Gastrocnemius medialis (tissue), 4 donors: ENCODE measurements at regions of chr9 and their contacts with region 1.

Region 1: DNA sequence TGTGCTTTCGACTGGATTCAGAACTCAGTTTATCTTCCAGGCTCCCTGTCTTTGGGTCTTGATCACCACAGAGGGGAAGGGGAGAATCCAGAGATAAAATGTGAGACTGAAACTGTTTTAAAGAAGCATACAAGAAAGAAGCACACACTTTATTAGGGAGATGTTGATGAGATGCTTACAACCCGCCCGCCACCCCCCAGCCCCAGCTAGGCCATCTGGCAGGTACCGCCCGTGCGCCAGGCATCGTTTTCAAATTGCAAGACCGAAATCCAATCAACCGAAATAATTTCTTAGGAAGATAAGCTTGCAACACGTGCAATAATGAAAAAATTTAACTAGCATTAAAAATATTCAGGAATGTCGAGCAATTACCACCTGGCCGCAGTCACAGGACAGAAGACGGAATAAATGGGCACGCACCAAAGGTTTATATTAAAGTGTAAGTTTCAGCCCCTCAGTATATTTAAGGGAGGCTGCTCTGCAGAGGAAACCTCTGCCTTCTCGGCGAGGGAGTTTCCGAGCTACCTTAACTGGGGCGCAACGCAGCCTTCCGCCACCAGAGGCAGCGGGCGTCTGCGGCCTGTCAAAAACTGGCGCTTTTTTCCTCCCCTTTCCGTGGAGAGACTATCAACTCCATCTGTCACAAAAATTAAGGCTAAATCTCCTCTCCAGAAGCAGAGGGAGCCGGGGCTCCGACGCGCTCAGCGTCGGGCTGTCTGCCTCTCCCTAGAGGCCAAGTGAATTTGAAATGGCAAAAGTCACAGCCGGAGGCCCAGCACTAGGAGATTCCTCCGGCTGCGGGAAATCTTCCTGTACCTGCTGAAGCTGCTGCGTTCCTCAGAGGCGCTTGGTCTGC is 996 bp upstream of the GAS1 start:
- DNase-seq: peak; percentile 56 to 64
- ATAC-seq: peak; percentile 58 to 63
- H3K4me3 ChIP-seq: peak overlapping the region; percentile 77 to 96 (median 80)
- H3K27ac ChIP-seq: peak overlapping the region; percentile 80 to 92 (median 84)
- H3K4me1 ChIP-seq: peaks cover 16 to 18% of the 10 kb centered on the region in 2 donors
- H3K27me3 ChIP-seq: peaks cover 5 to 11% (median 7%) of the 10 kb centered on the region in 3 donors
- CTCF ChIP-seq: peak; percentile 74 to 93 (median 82)
- POLR2A ChIP-seq: no peak

Region 2: DNA sequence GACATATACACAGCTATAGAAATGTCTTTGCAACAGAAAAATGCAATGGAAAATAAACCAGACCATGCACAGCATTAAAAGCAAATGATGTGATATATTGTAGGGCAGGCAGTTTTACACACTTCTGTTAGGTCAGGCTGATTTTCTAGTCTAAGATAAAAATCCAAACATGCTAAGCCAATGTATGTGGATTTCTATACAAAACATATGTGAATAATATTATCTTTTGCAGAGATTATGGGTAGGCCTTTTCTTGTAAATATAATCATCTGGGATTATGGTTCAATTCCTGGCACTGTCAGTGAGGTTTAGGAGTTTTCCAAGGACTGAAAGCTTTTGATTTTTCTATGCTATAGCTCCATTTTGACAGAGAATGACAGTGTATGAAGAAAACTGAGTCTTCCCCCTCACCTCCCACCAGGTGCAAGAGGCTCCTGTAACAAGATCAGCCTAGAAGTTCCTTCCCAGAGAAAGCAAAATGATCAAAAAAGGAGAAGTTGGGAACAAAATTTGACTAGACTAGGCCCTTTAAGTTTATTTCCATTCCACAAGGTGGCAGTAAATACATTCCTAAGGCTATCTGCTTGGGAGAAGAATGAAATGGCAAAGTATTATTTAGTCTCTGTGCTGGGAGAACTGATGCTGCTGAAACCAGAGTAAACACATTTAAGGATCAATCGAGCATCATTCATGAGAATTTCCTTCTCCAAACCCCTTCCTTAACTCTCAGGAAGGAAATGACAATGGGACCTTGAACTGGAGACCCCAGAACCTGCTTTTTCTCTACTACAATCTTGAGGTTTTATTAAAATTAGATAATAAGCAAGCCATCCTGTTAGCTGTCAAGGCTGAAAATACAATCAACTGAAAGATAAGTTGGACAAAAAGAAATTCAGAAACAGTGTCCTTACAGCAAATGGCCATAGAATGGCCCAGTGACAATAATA is 461.1 kb before region 1 on chr9:
- in situ Hi-C with region 1: loop called in 1 of 4 experiments (anchors 25 kb)
- intact Hi-C with region 1: no loop called
- DNase-seq: no peak
- ATAC-seq: peak; percentile 70 to 84
- H3K4me3 ChIP-seq: no peak overlapping the region
- H3K27ac ChIP-seq: no peak overlapping the region
- H3K4me1 ChIP-seq: no peaks in the 10 kb centered on the region
- H3K27me3 ChIP-seq: no peaks in the 10 kb centered on the region
- CTCF ChIP-seq: peak; percentile 52 to 67 (median 59)
- POLR2A ChIP-seq: no peak

Region 3: DNA sequence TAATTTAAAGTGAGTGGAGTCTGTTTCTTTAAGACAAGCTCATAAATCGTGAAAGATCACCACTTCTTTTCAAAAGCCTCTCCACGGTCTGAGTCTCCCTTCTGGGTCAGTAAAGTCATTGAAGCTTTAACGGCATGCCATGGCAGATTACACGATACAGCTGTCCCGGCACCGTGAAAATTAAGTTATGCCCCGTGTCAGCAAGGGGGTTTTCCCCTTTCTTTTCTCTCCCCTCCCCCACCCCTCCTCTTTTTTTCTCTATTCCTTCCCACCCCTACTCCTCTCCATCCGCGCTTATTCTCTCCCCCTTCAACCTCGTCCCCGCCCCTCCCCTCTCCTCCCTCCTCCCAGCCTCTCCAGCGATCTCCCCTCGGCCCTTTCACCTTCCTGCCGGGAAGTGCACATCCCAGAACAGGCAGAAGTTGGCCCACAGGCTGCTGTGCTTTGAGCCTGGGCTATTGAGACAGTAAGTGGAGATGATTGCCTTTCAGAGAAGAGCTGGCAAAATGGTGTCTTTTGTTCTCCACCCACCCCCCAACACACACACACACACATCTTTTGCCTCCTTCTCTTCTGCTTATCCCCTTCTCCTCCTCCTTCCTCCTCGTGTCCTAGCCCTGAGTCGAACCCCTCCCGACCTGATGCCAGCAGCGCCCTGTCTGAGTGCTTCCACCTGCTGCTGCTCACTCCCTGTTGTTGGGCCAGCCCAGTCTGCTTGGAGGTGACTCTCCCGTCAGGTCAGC is 45.1 kb before region 1 on chr9:
- in situ Hi-C with region 1: no loop called
- intact Hi-C with region 1: no loop called
- DNase-seq: no peak
- ATAC-seq: no peak
- H3K4me3 ChIP-seq: peak overlapping the region in 2 of 4 donors; percentile 0 to 10
- H3K27ac ChIP-seq: no peak overlapping the region
- H3K4me1 ChIP-seq: no peaks in the 10 kb centered on the region
- H3K27me3 ChIP-seq: peaks cover 12 to 19% (median 16%) of the 10 kb centered on the region in 3 donors
- CTCF ChIP-seq: no peak
- POLR2A ChIP-seq: no peak

Region 4: GRCh38 chr9:86983260-86984255 is 35.3 kb after region 1 on chr9:
- in situ Hi-C with region 1: no loop called
- intact Hi-C with region 1: loop called (anchors 2 kb)
- DNase-seq: peak; percentile 13 to 32
- ATAC-seq: peak; percentile 72 to 80
- H3K4me3 ChIP-seq: no peak overlapping the region
- H3K27ac ChIP-seq: peak overlapping the region in 3 of 4 donors; percentile 43 to 77 (median 47)
- H3K4me1 ChIP-seq: peaks cover 12 to 15% of the 10 kb centered on the region in 2 donors
- H3K27me3 ChIP-seq: no peaks in the 10 kb centered on the region
- CTCF ChIP-seq: no peak
- POLR2A ChIP-seq: no peak

Region 5: GRCh38 chr9:86997158-86997557 is 48.9 kb after region 1 on chr9:
- in situ Hi-C with region 1: no loop called
- intact Hi-C with region 1: loop called (anchors 2 kb)
- DNase-seq: no peak
- ATAC-seq: no peak
- H3K4me3 ChIP-seq: no peak overlapping the region
- H3K27ac ChIP-seq: no peak overlapping the region
- H3K4me1 ChIP-seq: no peaks in the 10 kb centered on the region
- H3K27me3 ChIP-seq: no peaks in the 10 kb centered on the region
- CTCF ChIP-seq: no peak
- POLR2A ChIP-seq: no peak